OCI-LY7 (cell line): ENCODE measurements at regions of chr16 and their contacts with region 1.

Region 1: DNA sequence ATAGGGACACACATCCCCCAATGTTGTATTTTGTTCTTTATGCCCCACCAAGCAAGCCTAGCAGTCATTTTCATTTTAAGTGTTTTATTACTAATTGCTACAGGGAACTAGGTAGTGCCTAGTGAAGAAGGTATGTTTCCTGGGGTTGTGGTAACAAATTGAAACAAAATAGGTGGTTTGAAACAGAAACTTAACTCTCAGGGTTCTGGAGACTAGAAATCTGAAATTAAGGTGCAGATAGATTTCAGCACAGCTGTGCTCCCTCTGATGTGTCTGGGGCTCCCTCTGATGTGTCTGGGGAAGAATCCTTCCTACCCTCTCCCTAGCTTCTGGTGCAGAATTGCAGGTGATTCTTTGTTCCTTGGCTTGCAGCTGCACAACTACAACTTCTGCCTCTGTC is 390.1 kb downstream of the ZFHX3 start:
- DNase-seq: peak; percentile 34
- H3K4me3 ChIP-seq: peak overlapping the region; percentile 40
- H3K27ac ChIP-seq: peak overlapping the region; percentile 43
- H3K4me1 ChIP-seq: peaks cover 47% of the 10 kb centered on the region
- CTCF ChIP-seq: no peak

Region 2: GRCh38 chr16:72530444-72530843 is 127.3 kb before region 1 on chr16:
- CTCF ChIA-PET with region 1: no interaction called
- POLR2A ChIA-PET with region 1: no interaction called
- intact Hi-C with region 1: no loop called
- DNase-seq: no peak
- H3K4me3 ChIP-seq: no peak overlapping the region
- H3K27ac ChIP-seq: no peak overlapping the region
- H3K4me1 ChIP-seq: no peaks in the 10 kb centered on the region
- CTCF ChIP-seq: no peak

Region 3: DNA sequence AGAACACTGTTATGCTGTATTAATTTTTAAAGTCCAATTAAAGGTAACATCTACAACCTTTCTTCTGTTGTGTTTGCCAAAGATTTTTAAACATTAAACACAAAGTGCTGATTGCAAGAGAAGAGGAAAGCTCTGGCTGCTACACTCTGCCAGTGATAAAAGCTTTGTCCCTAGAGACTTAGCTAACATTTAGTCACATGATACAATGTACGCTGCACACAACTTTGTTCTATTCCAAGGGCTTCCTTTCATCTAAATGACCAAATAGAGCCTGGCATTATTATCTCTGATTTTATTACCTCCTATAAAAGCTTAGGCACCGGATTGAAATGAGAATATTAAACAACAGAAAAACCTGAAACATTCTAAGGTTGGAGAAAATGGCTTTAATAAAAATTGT is 97.2 kb before region 1 on chr16:
- CTCF ChIA-PET with region 1: no interaction called
- POLR2A ChIA-PET with region 1: no interaction called
- intact Hi-C with region 1: no loop called
- DNase-seq: no peak
- H3K4me3 ChIP-seq: no peak overlapping the region
- H3K27ac ChIP-seq: no peak overlapping the region
- H3K4me1 ChIP-seq: no peaks in the 10 kb centered on the region
- CTCF ChIP-seq: no peak

Region 4: DNA sequence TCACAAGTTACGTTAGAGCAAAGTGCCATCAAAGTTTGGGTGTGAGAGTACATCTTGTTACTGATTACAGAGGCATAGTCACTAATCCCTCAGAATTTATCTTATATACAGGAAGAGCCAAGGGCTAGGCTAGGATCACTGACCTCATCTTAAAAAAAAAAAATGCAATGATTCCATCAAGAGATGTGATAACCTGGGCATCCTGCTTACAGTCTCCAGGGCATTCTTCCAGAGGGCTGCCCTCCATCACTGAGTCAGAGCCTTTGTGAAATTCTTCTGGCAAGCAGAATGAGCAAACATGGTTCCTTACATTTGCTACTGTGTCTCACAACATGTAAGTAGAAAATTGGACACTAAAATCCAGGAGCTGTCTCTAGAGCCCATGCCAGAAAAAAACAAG is 20.5 kb before region 1 on chr16:
- CTCF ChIA-PET with region 1: no interaction called
- POLR2A ChIA-PET with region 1: interaction called, 10 read pairs
- intact Hi-C with region 1: no loop called
- DNase-seq: no peak
- H3K4me3 ChIP-seq: no peak overlapping the region
- H3K27ac ChIP-seq: no peak overlapping the region
- H3K4me1 ChIP-seq: no peaks in the 10 kb centered on the region
- CTCF ChIP-seq: no peak

Region 5: DNA sequence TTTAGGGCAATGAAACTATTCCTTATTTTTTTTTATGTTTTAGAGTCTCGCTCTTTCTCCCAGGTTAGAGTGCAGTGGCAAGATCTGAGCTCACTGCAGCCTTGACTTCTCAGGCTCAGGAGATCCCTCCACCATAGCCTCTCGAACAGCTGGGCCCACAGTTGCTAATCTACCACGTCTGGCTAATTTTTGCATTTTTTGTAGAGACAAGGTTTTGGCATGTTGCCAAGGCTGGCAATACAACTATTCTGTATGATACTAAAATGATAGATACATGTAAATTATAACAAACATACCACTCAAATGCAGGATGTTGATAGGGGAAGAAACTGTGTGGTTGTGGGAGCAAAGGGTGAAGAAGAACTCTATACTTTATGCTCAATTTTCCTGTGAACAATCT is 11.2 kb before region 1 on chr16:
- CTCF ChIA-PET with region 1: no interaction called
- POLR2A ChIA-PET with region 1: interaction called, 14 read pairs
- intact Hi-C with region 1: no loop called
- DNase-seq: peak; percentile 31
- H3K4me3 ChIP-seq: no peak overlapping the region
- H3K27ac ChIP-seq: no peak overlapping the region
- H3K4me1 ChIP-seq: peaks cover 25% of the 10 kb centered on the region
- CTCF ChIP-seq: no peak

Region 6: GRCh38 chr16:72978212-72978611 is 320.4 kb after region 1 on chr16:
- CTCF ChIA-PET with region 1: no interaction called
- POLR2A ChIA-PET with region 1: no interaction called
- intact Hi-C with region 1: no loop called
- DNase-seq: no peak
- H3K4me3 ChIP-seq: no peak overlapping the region
- H3K27ac ChIP-seq: no peak overlapping the region
- H3K4me1 ChIP-seq: no peaks in the 10 kb centered on the region
- CTCF ChIP-seq: no peak